Activated B cell treated with CpG ODN at 0.5 μM for 24 hours (primary cell): ENCODE measurements at regions of chr5 and their contacts with region 1.

Region 1: DNA sequence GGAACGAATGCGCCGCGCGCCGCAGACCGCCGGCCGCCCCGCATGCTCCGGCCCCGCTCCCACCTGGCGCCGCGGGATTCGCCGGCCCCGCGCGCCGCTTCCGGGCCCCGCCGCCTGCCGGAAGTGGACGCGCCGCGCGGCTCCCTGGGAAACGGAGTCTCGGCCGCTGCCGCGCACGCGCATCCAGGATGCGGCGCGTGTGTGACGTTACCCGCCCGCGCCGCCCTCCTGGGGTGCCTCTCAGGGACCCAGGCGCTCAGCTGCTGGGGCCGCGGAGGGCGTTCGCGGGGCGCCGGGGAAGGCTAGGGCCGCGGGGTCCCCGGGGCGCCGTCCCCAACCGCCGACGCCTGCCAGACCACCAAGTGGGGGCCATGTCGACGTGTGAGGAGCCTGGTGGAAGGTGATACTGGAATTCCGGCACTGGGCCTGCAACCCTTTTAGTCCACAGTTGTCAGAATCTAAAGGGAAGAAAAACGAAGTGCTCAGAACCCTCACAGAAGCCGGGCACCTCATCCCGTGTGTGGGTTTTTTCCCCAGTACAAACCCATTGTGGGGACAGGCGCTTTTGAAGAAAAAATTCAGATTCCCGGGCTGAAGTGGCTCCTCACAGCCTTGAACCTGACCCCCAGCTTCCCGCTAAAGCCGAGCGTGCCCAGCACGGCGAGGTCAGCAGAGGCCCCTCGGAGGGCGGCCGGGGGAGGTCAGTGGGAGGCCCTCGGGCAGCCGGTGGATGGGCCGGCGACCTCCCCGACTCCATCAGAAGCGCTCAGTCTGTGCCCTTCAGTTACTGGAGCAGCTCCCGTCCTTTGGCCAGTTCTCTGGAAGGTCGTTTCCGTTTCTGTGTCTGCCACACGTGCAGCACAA is at the start of gene CLPTM1L:
- DNase-seq: peak; percentile 92
- ATAC-seq: peak; percentile 94
- H3K4me3 Mint-ChIP-seq: peak within 1 kb of the TSS; percentile 88
- H3K27ac Mint-ChIP-seq: peak within 1 kb of the TSS; percentile 80
- H3K4me1 Mint-ChIP-seq: peaks cover 37% of the 10 kb centered on the region
- H3K27me3 Mint-ChIP-seq: no peaks in the 10 kb centered on the region
- CTCF ChIP-seq: no peak
- total RNA-seq, gene CLPTM1L: 87.5 and 100 TPM in 2 replicates

Region 2: DNA sequence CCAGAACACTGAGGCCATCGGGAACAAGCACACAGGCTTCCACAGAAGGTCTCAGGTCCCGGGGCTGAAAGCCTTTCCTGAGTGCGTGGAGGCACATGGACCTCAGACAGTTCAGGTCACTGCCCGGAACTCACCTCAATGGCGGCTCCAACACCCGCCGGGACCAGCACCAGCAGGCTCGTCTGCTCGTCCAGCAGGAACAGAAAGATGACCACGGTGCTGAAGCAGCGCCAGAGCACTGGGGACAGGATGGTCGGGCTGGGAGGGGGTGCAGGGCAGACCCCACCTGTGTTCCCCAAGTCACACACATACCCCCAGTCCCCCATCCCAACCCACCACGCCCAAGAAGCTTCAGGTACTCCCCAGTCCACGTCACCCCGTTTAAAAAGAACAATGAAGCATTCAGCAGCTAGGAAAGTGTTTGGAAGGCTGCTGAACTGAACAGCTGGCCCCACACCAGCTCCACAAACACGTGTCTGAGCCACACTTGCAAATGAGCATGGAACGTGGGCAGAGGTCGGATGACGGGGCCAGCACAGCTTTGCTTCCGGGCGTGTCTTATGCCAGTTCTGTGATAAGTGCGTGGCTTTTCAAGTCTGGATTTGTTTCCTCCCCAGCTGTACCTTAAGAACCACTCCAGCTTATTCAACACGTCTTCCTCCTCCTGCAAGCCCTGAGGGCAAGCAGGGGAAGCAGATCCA is 14.9 kb before region 1 on chr5:
- CTCF ChIA-PET with region 1: no interaction called
- POLR2A ChIA-PET with region 1: no interaction called
- intact Hi-C with region 1: no loop called
- DNase-seq: no peak
- ATAC-seq: no peak
- H3K4me3 Mint-ChIP-seq: no peak overlapping the region
- H3K27ac Mint-ChIP-seq: no peak overlapping the region
- H3K4me1 Mint-ChIP-seq: no peaks in the 10 kb centered on the region
- H3K27me3 Mint-ChIP-seq: no peaks in the 10 kb centered on the region
- CTCF ChIP-seq: no peak

Region 3: DNA sequence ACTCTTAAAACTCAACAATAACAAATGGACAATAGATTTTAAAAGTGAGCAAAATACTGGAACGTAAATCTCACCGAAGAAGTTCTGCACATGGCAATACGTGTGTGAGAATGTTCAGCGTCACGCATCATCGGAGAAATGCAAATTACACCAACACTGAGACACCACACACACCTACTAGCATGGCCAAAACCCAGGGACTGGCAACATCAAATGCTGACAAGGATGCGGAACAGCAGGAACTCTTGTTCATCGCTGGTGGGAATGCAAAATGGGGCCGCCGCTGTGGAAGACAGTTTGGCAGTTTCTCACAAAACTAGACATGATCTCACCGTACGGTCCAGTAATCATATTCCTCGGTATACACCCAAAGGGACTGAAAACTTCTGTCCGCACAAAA is 21.3 kb after region 1 on chr5:
- CTCF ChIA-PET with region 1: no interaction called
- POLR2A ChIA-PET with region 1: interaction called, 6 read pairs
- intact Hi-C with region 1: loop called (anchors 1 kb)
- DNase-seq: no peak
- ATAC-seq: peak; percentile 90
- H3K4me3 Mint-ChIP-seq: peak overlapping the region; percentile 41
- H3K27ac Mint-ChIP-seq: peak overlapping the region; percentile 72
- H3K4me1 Mint-ChIP-seq: peaks cover 46% of the 10 kb centered on the region
- H3K27me3 Mint-ChIP-seq: peaks cover 7% of the 10 kb centered on the region
- CTCF ChIP-seq: no peak

Region 4: GRCh38 chr5:1380011-1380817 is 35.0 kb after region 1 on chr5:
- CTCF ChIA-PET with region 1: no interaction called
- POLR2A ChIA-PET with region 1: interaction called, 14 read pairs
- intact Hi-C with region 1: loop called (anchors 1 kb)
- DNase-seq: peak; percentile 69
- ATAC-seq: peak; percentile 97
- H3K4me3 Mint-ChIP-seq: peak overlapping the region; percentile 78
- H3K27ac Mint-ChIP-seq: no peak overlapping the region
- H3K4me1 Mint-ChIP-seq: peaks cover 22% of the 10 kb centered on the region
- H3K27me3 Mint-ChIP-seq: peaks cover 5% of the 10 kb centered on the region
- CTCF ChIP-seq: peak; percentile 50

Region 5: DNA sequence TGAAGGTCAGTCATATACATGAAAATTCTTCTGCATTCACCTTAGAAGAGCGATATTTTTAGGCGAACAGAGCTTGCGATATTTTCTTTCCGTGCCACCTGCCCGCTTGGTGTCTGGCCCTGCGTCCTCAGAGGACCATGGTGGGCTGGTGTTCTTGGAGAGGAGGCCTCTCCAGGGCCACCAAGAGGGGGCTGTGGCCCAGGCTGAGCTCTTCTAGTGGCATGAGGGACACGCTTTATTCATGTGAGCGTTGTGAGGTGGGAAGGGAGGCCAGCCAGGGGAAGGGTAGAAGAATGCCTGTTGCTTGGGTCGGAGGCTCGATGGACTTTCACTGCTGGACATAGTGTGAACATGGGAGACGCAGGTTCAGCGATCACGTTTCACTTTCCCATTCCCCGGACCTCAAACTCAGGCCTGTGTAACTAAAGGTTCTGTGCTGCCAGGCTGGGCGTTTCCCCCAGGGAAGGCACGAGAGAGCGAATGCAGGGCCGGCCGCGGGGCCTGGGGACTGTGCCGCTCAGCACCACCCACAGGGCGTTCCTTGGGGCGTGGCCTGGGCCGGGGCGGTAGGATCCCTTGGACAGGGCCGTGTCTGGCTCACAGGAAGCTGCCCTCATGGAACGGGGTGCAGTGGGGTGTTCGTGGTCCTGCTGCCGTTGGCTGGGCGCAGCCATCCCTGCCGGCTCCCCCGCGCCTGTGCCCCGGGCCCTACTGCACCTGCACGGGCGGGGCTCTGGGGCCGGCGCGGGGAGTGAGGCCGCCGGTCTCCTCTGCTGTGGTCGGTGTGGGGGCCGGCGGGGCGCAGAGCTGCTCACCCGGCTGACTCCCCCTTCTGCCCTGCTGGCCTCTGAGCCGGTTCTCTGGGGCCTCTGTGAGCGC is 40.4 kb after region 1 on chr5:
- CTCF ChIA-PET with region 1: interaction called, 3 read pairs
- POLR2A ChIA-PET with region 1: interaction called, 14 read pairs
- intact Hi-C with region 1: loop called (anchors 1 kb)
- DNase-seq: peak; percentile 85
- ATAC-seq: peak; percentile 94
- H3K4me3 Mint-ChIP-seq: peak overlapping the region; percentile 96
- H3K27ac Mint-ChIP-seq: peak overlapping the region; percentile 92
- H3K4me1 Mint-ChIP-seq: peaks cover 27% of the 10 kb centered on the region
- H3K27me3 Mint-ChIP-seq: peaks cover 2% of the 10 kb centered on the region
- CTCF ChIP-seq: no peak

Region 6: DNA sequence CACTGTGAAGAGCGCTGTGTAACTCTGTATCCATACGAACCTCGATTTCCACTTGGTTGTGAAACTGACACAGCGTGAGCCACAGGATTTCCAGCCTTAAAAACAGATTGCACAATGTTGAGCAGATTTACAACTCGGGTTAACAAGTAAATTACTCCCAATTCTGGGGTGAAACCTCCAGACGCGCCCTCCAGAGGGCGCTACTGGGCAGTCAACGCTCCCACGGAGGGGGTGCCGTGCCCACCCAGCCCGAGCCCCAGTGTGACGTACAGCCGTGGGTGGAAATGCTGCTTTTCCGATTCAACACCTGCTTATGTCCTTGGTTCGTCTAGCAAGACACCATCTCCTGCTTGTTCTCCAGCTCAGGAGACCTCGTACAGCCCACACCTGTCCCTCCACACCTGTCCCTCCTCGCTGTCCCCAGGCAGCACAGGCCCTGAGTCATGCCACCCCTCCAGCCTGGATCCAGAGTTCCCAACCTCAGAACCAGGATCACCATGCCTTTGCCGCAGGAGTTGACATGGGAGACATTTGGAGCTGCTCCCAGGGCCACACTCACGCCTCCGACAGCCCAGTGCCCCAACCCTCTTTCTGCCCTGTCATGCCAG is 134.5 kb after region 1 on chr5:
- CTCF ChIA-PET with region 1: no interaction called
- POLR2A ChIA-PET with region 1: interaction called, 9 read pairs
- intact Hi-C with region 1: loop called (anchors 10 kb)
- DNase-seq: peak; percentile 68
- ATAC-seq: peak; percentile 53
- H3K4me3 Mint-ChIP-seq: peak overlapping the region; percentile 73
- H3K27ac Mint-ChIP-seq: peak overlapping the region; percentile 92
- H3K4me1 Mint-ChIP-seq: peaks cover 61% of the 10 kb centered on the region
- H3K27me3 Mint-ChIP-seq: no peaks in the 10 kb centered on the region
- CTCF ChIP-seq: no peak

Region 7: GRCh38 chr5:1594357-1595106 is 249.3 kb after region 1 on chr5:
- CTCF ChIA-PET with region 1: interaction called, 3 read pairs
- POLR2A ChIA-PET with region 1: no interaction called
- intact Hi-C with region 1: loop called (anchors 1 kb)
- DNase-seq: peak; percentile 81
- ATAC-seq: peak; percentile 94
- H3K4me3 Mint-ChIP-seq: peak overlapping the region; percentile 82
- H3K27ac Mint-ChIP-seq: peak overlapping the region; percentile 56
- H3K4me1 Mint-ChIP-seq: peaks cover 19% of the 10 kb centered on the region
- H3K27me3 Mint-ChIP-seq: no peaks in the 10 kb centered on the region
- CTCF ChIP-seq: no peak

Region 8: DNA sequence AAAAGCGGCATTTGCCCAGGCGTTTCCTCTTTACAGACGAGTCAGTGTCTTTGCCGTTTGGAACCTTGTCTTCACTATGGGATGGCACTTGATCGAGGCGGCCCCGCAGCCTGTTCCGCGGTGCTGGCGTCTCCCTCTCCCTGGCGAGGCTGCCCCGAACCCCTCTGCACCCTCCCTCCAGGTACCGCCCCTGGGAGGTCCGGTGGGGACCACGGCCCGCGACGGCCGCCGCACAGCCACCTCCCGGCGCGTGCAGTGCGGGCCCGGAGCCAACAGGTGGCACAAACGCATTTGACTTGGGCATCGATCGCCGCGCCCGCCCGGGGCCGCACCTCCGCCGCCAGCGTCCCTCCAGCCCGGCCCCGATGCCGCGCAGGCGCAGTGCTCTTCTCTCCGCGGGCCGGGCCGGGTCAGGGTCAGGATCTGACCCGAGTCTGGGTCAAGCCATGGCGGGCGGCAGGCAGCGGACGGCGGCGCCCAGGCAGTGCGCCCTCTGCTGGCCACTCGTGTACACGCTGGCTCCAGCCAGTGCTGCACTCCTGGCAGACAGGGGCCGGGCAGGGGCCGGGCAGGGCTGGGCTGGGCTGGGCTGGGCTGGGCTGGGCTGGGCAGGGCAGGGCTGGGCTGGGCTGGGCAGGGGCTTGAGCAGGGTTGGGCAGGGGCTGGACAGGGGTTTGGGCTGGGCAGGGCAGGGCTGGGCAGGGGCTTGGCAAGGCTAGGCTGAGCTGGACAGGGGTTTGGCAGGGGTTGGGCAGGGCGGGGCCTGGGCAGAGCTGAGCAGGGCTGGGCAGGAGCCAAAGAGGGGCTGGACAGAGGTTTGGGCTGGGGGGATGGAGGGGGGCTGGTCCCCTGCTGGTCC is 693.3 kb after region 1 on chr5:
- CTCF ChIA-PET with region 1: no interaction called
- POLR2A ChIA-PET with region 1: no interaction called
- intact Hi-C with region 1: no loop called
- DNase-seq: peak; percentile 57
- ATAC-seq: peak; percentile 83
- H3K4me3 Mint-ChIP-seq: peak overlapping the region; percentile 68
- H3K27ac Mint-ChIP-seq: no peak overlapping the region
- H3K4me1 Mint-ChIP-seq: no peaks in the 10 kb centered on the region
- H3K27me3 Mint-ChIP-seq: peaks cover 23% of the 10 kb centered on the region
- CTCF ChIP-seq: peak; percentile 40